GM12878 (cell line): ENCODE measurements at regions of chrX and their contacts with region 1.

Region 1: DNA sequence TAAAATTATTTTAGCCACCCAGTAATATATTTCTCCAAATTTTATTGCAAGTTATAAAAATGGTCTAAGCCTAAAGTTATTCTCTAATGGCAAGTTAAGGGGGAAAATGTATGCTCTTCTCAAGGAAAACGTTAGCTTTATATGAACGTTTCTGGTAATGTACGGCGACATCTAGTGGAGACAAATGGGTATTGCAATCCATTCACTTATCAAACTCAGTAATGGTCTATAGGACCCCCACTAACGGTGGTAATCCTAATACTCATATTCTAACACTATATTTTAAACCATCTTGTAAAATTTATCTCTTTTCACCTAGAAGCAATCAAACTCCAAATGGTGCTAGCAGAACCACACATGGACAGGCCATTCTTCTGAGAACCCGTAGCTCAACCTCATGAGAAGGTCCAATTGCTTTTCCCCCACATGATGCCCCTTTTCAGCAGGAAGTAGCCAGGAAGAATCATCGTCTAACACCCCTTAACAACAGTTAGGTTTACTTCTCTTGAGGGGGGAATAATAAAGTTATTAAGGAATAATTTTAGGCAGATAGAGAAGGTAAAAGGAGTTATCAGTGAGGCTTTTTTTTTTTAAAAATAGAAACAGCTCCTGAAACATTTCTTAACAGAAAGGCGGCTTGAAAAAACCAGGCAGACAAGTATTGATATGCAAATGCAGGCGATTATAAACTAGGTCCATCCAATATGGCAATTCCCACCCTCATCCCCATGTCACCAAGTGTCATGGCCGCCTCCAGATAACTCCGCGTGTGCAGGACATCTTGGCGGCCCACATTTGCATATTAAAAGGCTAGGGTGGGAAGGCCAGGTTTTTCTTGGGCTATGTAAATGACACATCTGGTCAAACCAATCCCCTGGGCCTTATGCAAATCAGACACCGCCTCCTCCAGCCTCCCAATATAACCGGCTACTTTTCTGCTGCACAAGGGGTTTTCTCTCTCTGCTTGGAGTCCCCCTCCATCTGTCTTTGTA is 35.0 kb downstream of the NUDT11 start:
- DNase-seq: no peak
- ATAC-seq: peak; percentile 67
- H3K4me3 ChIP-seq: no peak overlapping the region
- H3K27ac ChIP-seq: no peak overlapping the region
- H3K4me1 ChIP-seq: no peaks in the 10 kb centered on the region
- H3K27me3 ChIP-seq: no peaks in the 10 kb centered on the region
- CTCF ChIP-seq: peak; percentile 72 to 76 (median 73)
- EP300 ChIP-seq: no peak
- POLR2A ChIP-seq: no peak
- RAD21 ChIP-seq: peak; percentile 55

Region 2: DNA sequence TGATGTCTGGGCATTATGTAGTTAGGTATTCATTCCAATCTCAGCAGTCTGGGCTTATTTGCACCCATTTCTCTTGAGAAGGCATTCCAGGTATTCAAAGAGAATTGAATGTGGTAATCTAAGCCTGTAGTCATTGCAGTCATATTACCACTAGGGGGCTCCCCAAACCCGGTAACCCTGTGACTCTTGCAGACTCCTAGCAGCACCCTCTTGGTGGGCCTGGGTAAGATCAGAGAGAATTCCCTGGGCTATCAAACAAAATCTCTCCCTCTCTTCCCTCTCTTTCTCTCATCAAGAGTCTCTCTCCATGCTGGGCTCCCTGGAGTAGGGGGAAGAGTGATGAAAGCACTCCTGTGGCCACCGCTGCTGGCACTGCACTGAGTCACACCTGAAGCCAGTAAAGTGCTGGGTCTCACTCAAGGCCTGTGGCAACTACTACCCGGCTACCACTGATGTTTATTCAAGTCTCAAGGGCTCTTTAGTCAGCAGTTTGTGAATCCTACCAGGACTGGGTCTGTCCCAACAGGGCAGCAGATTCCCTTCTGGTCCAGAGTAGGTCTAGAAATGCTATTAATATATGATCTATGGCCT is 316.4 kb before region 1 on chrX:
- CTCF ChIA-PET with region 1: interaction called, 5 read pairs
- POLR2A ChIA-PET with region 1: no interaction called
- RAD21 ChIA-PET with region 1: no interaction called
- SMC1A ChIA-PET with region 1: no interaction called
- in situ Hi-C with region 1: no loop called
- intact Hi-C with region 1: loop called (anchors 5 kb)
- DNase-seq: peak; percentile 1
- ATAC-seq: peak; percentile 92
- H3K4me3 ChIP-seq: no peak overlapping the region
- H3K27ac ChIP-seq: no peak overlapping the region
- H3K4me1 ChIP-seq: no peaks in the 10 kb centered on the region
- H3K27me3 ChIP-seq: no peaks in the 10 kb centered on the region
- CTCF ChIP-seq: peak; percentile 65 to 80 (median 78)
- EP300 ChIP-seq: no peak
- POLR2A ChIP-seq: no peak
- RAD21 ChIP-seq: peak; percentile 65

Region 3: GRCh38 chrX:51336584-51336983 is 124.8 kb before region 1 on chrX:
- CTCF ChIA-PET with region 1: interaction called, 17 read pairs
- POLR2A ChIA-PET with region 1: no interaction called
- RAD21 ChIA-PET with region 1: interaction called, 5 read pairs
- SMC1A ChIA-PET with region 1: interaction called, 3 read pairs
- in situ Hi-C with region 1: no loop called
- intact Hi-C with region 1: loop called (anchors 5 kb)
- DNase-seq: no peak
- ATAC-seq: peak; percentile 74
- H3K4me3 ChIP-seq: no peak overlapping the region
- H3K27ac ChIP-seq: no peak overlapping the region
- H3K4me1 ChIP-seq: no peaks in the 10 kb centered on the region
- H3K27me3 ChIP-seq: no peaks in the 10 kb centered on the region
- CTCF ChIP-seq: peak; percentile 32 to 50 (median 46); a peak in 4 of 6 replicates
- EP300 ChIP-seq: no peak
- POLR2A ChIP-seq: no peak
- RAD21 ChIP-seq: peak; percentile 57

Region 4: GRCh38 chrX:51420610-51421009 is 40.7 kb before region 1 on chrX:
- CTCF ChIA-PET with region 1: interaction called, 25 read pairs
- POLR2A ChIA-PET with region 1: no interaction called
- RAD21 ChIA-PET with region 1: no interaction called
- SMC1A ChIA-PET with region 1: no interaction called
- in situ Hi-C with region 1: no loop called
- intact Hi-C with region 1: no loop called
- DNase-seq: no peak
- ATAC-seq: peak; percentile 58
- H3K4me3 ChIP-seq: no peak overlapping the region
- H3K27ac ChIP-seq: no peak overlapping the region
- H3K4me1 ChIP-seq: no peaks in the 10 kb centered on the region
- H3K27me3 ChIP-seq: no peaks in the 10 kb centered on the region
- CTCF ChIP-seq: peak; percentile 60 to 74 (median 62); a peak in 5 of 6 replicates
- EP300 ChIP-seq: no peak
- POLR2A ChIP-seq: no peak
- RAD21 ChIP-seq: peak; percentile 53

Region 5: GRCh38 chrX:51476930-51477329 is 15.6 kb after region 1 on chrX:
- CTCF ChIA-PET with region 1: interaction called, 32 read pairs
- POLR2A ChIA-PET with region 1: no interaction called
- RAD21 ChIA-PET with region 1: no interaction called
- SMC1A ChIA-PET with region 1: interaction called, 3 read pairs
- in situ Hi-C with region 1: no loop called
- intact Hi-C with region 1: no loop called
- DNase-seq: no peak
- ATAC-seq: no peak
- H3K4me3 ChIP-seq: no peak overlapping the region
- H3K27ac ChIP-seq: no peak overlapping the region
- H3K4me1 ChIP-seq: no peaks in the 10 kb centered on the region
- H3K27me3 ChIP-seq: no peaks in the 10 kb centered on the region
- CTCF ChIP-seq: no peak
- EP300 ChIP-seq: no peak
- POLR2A ChIP-seq: no peak
- RAD21 ChIP-seq: no peak

Region 6: GRCh38 chrX:51487960-51488267 is 26.6 kb after region 1 on chrX:
- CTCF ChIA-PET with region 1: interaction called, 19 read pairs
- POLR2A ChIA-PET with region 1: no interaction called
- RAD21 ChIA-PET with region 1: interaction called, 3 read pairs
- SMC1A ChIA-PET with region 1: interaction called, 3 read pairs
- in situ Hi-C with region 1: no loop called
- intact Hi-C with region 1: no loop called
- DNase-seq: no peak
- ATAC-seq: no peak; the same call in 2 of the 3 replicates
- H3K4me3 ChIP-seq: no peak overlapping the region
- H3K27ac ChIP-seq: no peak overlapping the region
- H3K4me1 ChIP-seq: no peaks in the 10 kb centered on the region
- H3K27me3 ChIP-seq: no peaks in the 10 kb centered on the region; a peak in 1 of 4 replicates
- CTCF ChIP-seq: no peak
- EP300 ChIP-seq: no peak
- POLR2A ChIP-seq: no peak
- RAD21 ChIP-seq: no peak